BJ (cell line): ENCODE measurements at regions of chr11 and their contacts with region 1.

Region 1: DNA sequence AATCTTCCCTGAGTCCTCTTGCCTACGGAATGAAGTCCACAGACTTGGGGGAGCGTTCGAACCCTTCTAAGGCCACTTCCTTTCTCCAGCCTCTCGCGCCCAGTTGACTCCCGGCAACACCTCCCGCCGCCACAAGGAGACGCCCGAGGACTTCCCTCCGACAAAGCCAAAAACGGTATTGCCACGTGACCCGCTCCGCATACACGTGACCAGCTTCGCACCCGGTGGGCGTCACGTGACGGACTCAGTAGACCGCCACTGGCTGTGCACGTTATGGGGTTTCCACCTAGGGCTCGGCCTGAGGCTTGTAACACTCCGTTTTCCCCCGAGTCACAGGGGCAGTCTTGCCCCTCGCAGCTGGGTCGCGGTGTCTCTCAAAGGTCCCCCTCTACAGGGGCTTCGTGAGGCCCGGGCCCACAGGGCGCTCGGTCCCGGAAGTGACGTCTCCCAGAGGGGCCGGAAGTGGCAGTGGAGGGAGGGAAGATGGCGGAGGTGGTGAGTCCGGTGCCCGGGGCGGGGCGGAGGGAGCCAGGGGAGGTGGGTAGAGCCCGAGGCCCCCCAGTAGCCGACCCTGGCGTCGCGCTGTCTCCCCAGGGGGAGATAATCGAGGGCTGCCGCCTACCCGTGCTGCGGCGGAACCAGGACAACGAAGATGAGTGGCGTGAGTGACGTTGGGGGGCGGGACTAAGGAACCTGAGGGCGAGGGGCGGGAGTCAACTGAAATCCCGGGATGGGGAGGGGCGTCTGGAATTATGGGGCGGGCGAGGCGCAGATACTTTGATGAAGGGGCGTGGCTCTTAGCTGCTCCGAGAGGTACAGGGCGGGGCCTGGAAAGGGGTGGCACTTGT is at the start of gene KAT5:
- DNase-seq: peak; percentile 85
- H3K4me3 ChIP-seq: peak within 1 kb of the TSS; percentile 71
- H3K27me3 ChIP-seq: no peaks in the 10 kb centered on the region
- CTCF ChIP-seq: peak; percentile 98
- polyA plus RNA-seq, gene KAT5: 31.4 and 50.9 TPM in 2 replicates

Region 2: DNA sequence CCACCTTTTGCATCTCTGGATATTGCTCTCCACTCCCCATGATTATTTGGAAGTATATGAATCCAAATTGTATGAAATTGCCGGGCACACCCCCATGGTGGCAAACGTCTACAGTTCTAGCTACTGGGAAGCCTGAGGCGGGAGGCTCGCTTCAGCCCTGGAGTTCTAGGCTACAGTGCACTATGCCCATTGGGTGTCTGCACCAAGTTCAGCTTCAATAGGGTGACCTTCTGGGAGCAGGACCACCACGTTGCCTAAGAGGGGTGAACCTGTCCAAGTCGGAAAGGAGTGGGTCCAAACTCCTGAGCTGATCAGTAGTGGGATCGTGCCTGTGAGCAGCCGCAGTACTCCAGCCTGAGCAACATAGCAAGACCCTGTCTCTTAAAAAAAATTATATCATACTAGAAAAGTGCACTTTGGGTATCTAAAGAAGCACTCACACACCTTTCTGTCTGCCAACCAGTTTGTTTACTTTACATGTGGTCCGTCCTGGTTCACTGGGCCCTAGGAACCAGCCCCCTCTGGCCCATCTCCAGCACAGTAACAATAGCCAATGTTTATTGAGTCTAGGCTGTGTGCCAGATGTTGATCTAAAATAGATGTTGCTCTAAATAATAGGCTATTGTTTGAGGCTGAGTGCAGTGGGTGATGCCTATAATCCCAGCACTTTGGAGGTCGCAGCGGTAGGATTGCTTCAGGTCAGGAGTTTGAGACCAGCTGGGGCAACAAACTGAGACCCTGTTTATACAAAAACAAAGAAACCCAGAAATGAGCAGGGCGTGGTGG is 16.4 kb before region 1 on chr11:
- CTCF ChIA-PET with region 1: interaction called, 34 read pairs
- POLR2A ChIA-PET with region 1: no interaction called
- DNase-seq: no peak
- H3K4me3 ChIP-seq: no peak overlapping the region
- H3K27me3 ChIP-seq: peaks cover 8% of the 10 kb centered on the region
- CTCF ChIP-seq: no peak

Region 3: GRCh38 chr11:65779851-65780577 is 68.0 kb after region 1 on chr11:
- CTCF ChIA-PET with region 1: interaction called, 50 read pairs
- POLR2A ChIA-PET with region 1: no interaction called
- DNase-seq: no peak
- H3K4me3 ChIP-seq: peak overlapping the region; percentile 98
- H3K27me3 ChIP-seq: 0 out of 2 replicates have a peak, but pooled peaks cover 1% of the 10 kb centered on the region
- CTCF ChIP-seq: peak; percentile 91

Region 4: GRCh38 chr11:65817835-65818742 is 106.1 kb after region 1 on chr11:
- CTCF ChIA-PET with region 1: interaction called, 43 read pairs
- POLR2A ChIA-PET with region 1: interaction called, 3 read pairs
- DNase-seq: no peak
- H3K4me3 ChIP-seq: peak overlapping the region; percentile 58
- H3K27me3 ChIP-seq: no peaks in the 10 kb centered on the region
- CTCF ChIP-seq: peak; percentile 93

Region 5: GRCh38 chr11:65988791-65989592 is 277.0 kb after region 1 on chr11:
- CTCF ChIA-PET with region 1: interaction called, 10 read pairs
- POLR2A ChIA-PET with region 1: no interaction called
- DNase-seq: peak; percentile 70
- H3K4me3 ChIP-seq: no peak overlapping the region
- H3K27me3 ChIP-seq: no peaks in the 10 kb centered on the region
- CTCF ChIP-seq: peak; percentile 93